GM12878 (cell line): ENCODE measurements at regions of chr5 and their contacts with region 1.

Region 1: DNA sequence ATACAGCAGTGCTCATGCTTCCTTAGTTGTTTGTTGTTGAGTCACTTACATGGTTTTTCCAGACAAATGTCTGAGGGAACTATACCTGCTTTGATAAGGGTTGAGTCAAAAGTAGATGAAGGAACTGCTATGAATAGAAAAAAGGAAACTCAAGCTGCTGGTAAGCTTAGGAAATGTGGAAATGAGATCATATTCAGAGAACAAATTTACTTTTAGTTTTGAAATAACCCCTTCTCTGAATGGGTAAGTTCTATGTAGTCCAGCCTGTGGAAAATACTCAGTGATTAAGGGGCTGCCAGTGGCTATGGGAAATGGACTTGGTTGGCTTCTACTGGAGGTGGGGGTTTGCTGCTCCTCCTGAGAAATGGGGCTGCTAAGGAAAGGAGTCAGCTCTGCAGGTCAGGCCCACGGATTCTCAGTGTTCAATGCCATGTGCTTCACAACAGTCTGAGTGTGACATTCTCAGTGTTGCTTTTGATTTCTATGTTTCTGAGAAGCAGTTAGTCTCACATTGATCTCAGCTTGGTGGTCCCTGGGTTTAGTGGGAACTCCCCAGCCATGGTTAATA is 47.7 kb upstream of the GLRX start:
- DNase-seq: peak; percentile 65
- ATAC-seq: peak; percentile 84
- H3K4me3 ChIP-seq: peak overlapping the region; percentile 54; the same call in 1 of the 2 replicates
- H3K27ac ChIP-seq: peak overlapping the region; percentile 82
- H3K4me1 ChIP-seq: peaks cover 24% of the 10 kb centered on the region
- H3K27me3 ChIP-seq: no peaks in the 10 kb centered on the region
- CTCF ChIP-seq: no peak
- EP300 ChIP-seq: no peak; a peak in 1 of 4 replicates
- POLR2A ChIP-seq: 0 out of 2 replicates have a peak, but pooled peaks have one; percentile 32
- RAD21 ChIP-seq: no peak

Region 2: DNA sequence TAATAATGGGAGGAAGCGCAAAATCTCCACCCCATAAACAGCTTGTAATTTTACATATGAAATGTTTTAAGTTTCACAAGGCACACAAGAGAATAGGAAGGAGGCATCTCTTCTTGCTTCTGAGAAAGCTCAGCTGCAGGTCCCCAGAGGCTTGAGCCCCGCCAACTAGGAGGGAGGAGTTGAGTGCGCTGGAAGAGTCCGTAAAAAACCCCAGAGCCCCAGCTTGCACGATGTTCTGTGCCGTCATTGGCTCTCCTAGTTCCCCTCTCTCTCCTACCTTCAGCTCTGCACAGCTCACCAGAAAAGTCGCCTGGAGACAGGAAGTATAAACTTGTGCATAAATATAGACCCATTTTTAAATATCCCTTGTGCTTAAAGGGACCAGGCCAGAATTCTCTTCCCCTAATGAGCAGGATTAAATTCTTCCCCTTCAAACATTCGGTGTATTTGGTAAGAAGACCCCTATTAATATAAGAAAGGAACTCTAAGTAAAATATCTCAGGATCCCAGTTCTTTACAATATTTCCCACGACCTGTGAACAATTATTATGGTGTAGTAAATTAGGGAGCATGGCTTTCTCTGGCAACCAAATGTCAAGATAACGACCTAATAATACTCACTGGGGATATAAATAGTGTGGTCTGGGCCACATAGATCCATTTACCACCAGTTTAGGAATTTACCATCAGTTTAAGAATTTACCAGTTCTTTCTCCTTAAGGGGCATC is 61.3 kb before region 1 on chr5:
- CTCF ChIA-PET with region 1: interaction called, 4 read pairs
- POLR2A ChIA-PET with region 1: no interaction called
- RAD21 ChIA-PET with region 1: interaction called, 12 read pairs
- SMC1A ChIA-PET with region 1: interaction called, 6 read pairs
- in situ Hi-C with region 1: no loop called
- intact Hi-C with region 1: no loop called
- DNase-seq: peak; percentile 98
- ATAC-seq: peak; percentile 100
- H3K4me3 ChIP-seq: peak overlapping the region; percentile 36; the same call in 1 of the 2 replicates
- H3K27ac ChIP-seq: peak overlapping the region; percentile 97
- H3K4me1 ChIP-seq: peaks cover 29% of the 10 kb centered on the region
- H3K27me3 ChIP-seq: no peaks in the 10 kb centered on the region
- CTCF ChIP-seq: no peak
- EP300 ChIP-seq: peak; percentile 12 to 13; a peak in 1 of 4 replicates
- POLR2A ChIP-seq: no peak
- RAD21 ChIP-seq: no peak

Region 3: DNA sequence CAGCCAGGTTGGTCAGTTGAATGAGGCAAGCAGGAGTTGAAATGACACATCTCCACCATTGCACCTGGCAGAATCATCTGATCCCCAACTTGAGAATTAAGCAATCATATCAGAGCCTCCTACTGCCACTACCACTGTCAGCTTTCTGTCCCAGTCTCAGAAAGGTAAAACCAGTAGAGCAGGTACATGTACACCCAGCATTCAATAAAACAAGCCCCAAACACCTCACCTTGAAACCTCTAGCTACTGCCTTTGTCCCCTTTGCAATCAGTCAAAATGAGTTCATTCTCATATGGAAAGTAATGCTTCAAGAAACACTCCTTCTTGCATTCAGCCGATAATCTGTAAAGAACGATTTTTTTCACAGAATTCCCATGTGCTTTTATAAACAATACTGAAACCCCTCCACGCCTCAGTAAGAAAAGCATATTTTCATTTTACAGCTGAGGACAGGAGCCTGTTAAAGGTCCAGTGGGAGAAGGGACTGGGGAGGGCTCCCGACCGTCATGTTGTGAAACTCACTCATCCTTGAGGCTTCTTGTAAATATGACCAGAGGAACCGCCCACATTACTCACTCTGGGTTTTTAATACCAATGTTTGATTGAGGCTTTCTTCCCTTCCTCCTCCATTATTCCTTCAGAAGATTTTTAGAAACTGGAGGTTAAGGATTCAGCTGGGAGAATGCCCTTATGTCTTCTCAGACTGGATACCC is 13.6 kb after region 1 on chr5:
- CTCF ChIA-PET with region 1: interaction called, 23 read pairs
- POLR2A ChIA-PET with region 1: interaction called, 16 read pairs
- RAD21 ChIA-PET with region 1: interaction called, 29 read pairs
- SMC1A ChIA-PET with region 1: interaction called, 22 read pairs
- in situ Hi-C with region 1: no loop called
- intact Hi-C with region 1: no loop called
- DNase-seq: peak; percentile 48
- ATAC-seq: peak; percentile 75
- H3K4me3 ChIP-seq: 0 out of 2 replicates have a peak overlapping the region, but pooled peaks have one; percentile 13
- H3K27ac ChIP-seq: no peak overlapping the region
- H3K4me1 ChIP-seq: peaks cover 9% of the 10 kb centered on the region; the same call in 1 of the 2 replicates
- H3K27me3 ChIP-seq: no peaks in the 10 kb centered on the region; a peak in 1 of 4 replicates
- CTCF ChIP-seq: no peak
- EP300 ChIP-seq: no peak
- POLR2A ChIP-seq: no peak; the same call in 1 of the 2 replicates
- RAD21 ChIP-seq: no peak

Region 4: GRCh38 chr5:95907067-95907705 is 37.0 kb after region 1 on chr5:
- CTCF ChIA-PET with region 1: interaction called, 3 read pairs
- POLR2A ChIA-PET with region 1: interaction called, 8 read pairs
- RAD21 ChIA-PET with region 1: interaction called, 18 read pairs
- SMC1A ChIA-PET with region 1: interaction called, 49 read pairs
- in situ Hi-C with region 1: no loop called
- intact Hi-C with region 1: no loop called
- DNase-seq: no peak
- ATAC-seq: peak; percentile 76
- H3K4me3 ChIP-seq: no peak overlapping the region
- H3K27ac ChIP-seq: peak overlapping the region; percentile 11; the same call in 1 of the 2 replicates
- H3K4me1 ChIP-seq: peaks cover 11% of the 10 kb centered on the region
- H3K27me3 ChIP-seq: no peaks in the 10 kb centered on the region
- CTCF ChIP-seq: no peak
- EP300 ChIP-seq: no peak
- POLR2A ChIP-seq: no peak
- RAD21 ChIP-seq: no peak

Region 5: GRCh38 chr5:95949810-95950209 is 79.6 kb after region 1 on chr5:
- CTCF ChIA-PET with region 1: interaction called, 3 read pairs
- POLR2A ChIA-PET with region 1: no interaction called
- RAD21 ChIA-PET with region 1: interaction called, 27 read pairs
- SMC1A ChIA-PET with region 1: interaction called, 9 read pairs
- in situ Hi-C with region 1: no loop called
- intact Hi-C with region 1: no loop called
- DNase-seq: no peak
- ATAC-seq: peak; percentile 68
- H3K4me3 ChIP-seq: peak overlapping the region; percentile 15; the same call in 1 of the 2 replicates
- H3K27ac ChIP-seq: peak overlapping the region; percentile 67
- H3K4me1 ChIP-seq: peaks cover 18% of the 10 kb centered on the region; the same call in 1 of the 2 replicates
- H3K27me3 ChIP-seq: no peaks in the 10 kb centered on the region
- CTCF ChIP-seq: no peak
- EP300 ChIP-seq: no peak
- POLR2A ChIP-seq: no peak
- RAD21 ChIP-seq: no peak

Region 6: GRCh38 chr5:96049398-96050272 is 179.4 kb after region 1 on chr5:
- CTCF ChIA-PET with region 1: no interaction called
- POLR2A ChIA-PET with region 1: no interaction called
- RAD21 ChIA-PET with region 1: no interaction called
- SMC1A ChIA-PET with region 1: no interaction called
- in situ Hi-C with region 1: no loop called
- intact Hi-C with region 1: no loop called
- DNase-seq: no peak
- ATAC-seq: no peak
- H3K4me3 ChIP-seq: no peak overlapping the region
- H3K27ac ChIP-seq: no peak overlapping the region
- H3K4me1 ChIP-seq: no peaks in the 10 kb centered on the region
- H3K27me3 ChIP-seq: no peaks in the 10 kb centered on the region
- CTCF ChIP-seq: no peak
- EP300 ChIP-seq: no peak
- POLR2A ChIP-seq: no peak
- RAD21 ChIP-seq: no peak